Activated CD4-positive, alpha-beta T cell treated with anti-CD3 and anti-CD28 coated beads for 36 hours (primary cell): ENCODE measurements at regions of chrX and their contacts with region 1.

Region 1: DNA sequence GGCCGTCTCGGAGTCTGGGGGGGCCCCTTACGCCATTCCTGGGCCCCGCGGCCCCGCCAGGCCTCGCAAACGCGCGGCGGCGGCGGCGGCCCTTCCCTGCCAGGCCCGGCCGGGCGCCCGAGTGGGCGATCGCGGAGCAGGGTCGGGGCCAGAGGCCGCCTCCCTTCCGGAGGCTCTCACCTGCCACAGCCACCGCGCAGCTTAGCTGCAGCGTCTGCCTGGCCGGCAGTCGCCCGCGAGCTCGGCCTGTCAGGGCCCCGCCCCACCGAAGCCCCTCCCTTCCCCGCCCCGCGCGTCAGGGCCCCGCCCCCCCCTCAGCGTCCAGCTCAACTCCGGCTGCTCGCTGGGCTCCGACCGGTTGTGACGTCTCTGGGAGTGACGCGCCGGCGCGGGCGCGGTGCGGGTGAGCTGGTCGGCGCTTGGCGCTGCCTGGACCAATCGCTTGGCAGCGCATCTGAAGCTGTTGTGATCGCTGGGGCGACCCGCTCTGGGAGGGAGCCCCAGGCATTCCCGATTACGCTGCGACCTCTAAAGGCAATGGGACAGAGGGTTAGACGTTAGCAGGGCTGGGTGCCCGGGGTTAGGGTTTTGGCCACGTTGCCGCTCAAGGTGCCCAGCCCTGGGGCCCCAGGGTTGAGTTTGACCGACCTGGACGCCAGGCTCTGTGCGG is at the start of gene SLC10A3:
- DNase-seq: peak; percentile 94
- ATAC-seq: peak; percentile 91
- H3K4me3 Mint-ChIP-seq: peak within 1 kb of the TSS; percentile 85
- H3K27ac Mint-ChIP-seq: peak within 1 kb of the TSS; percentile 89
- H3K4me1 Mint-ChIP-seq: peaks cover 17% of the 10 kb centered on the region
- H3K27me3 Mint-ChIP-seq: no peaks in the 10 kb centered on the region
- total RNA-seq, gene SLC10A3: 10.4 to 11.3 TPM

Region 2: GRCh38 chrX:153724252-153725040 is 766.1 kb before region 1 on chrX and contains the starts of genes ABCD1 and BCAP31:
- CTCF ChIA-PET with region 1: no interaction called
- POLR2A ChIA-PET with region 1: interaction called, 3 read pairs
- intact Hi-C with region 1: loop called in 1 of 2 experiments (anchors 10 kb)
- DNase-seq: peak; percentile 93
- ATAC-seq: peak; percentile 84
- H3K4me3 Mint-ChIP-seq: peak within 1 kb of the TSS; percentile 89
- H3K27ac Mint-ChIP-seq: peak within 1 kb of the TSS; percentile 87
- H3K4me1 Mint-ChIP-seq: peaks cover 20% of the 10 kb centered on the region
- H3K27me3 Mint-ChIP-seq: no peaks in the 10 kb centered on the region
- total RNA-seq, gene ABCD1: 4.5 to 4.8 TPM
- total RNA-seq, gene BCAP31: 78.0 to 106 TPM

Region 3: DNA sequence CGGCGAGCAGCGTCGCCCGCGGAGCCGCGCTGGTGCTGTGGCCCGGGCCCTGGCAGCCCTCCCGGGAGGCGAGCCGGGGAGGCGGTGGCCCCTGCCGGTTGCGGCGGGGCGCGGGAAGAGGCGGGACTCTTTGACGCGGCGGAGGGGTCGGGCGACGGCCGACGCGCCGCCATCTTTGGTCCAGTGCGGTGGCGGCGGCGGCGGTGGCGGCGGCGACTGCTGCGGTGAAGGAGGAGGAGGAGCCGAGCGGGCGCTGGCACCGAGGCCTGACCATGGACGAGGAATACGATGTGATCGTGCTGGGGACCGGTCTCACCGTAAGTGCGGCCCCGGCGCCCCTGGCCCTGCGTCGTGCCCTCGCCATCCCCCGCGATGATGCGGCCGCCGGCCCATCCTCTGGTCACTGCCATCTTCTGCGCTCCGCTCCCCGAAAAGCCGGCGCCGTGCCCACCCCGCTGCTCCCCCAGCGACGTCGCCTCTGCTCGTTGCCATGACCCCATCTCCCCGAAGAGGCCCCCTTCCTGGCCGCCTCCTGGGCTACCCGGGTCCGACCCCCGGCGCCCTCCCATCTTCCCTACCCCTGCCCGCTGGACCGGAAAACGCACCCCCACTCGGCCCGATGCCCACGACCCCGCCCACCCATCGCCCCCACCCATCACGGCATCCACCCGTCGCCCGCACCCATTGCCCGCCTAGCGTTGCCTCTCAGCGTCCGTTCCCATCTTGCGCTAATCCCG is 53.4 kb before region 1 on chrX and contains the start of gene GDI1:
- CTCF ChIA-PET with region 1: interaction called, 3 read pairs
- POLR2A ChIA-PET with region 1: no interaction called
- intact Hi-C with region 1: loop called in 1 of 2 experiments (anchors 2 kb)
- DNase-seq: peak; percentile 69
- ATAC-seq: peak; percentile 40
- H3K4me3 Mint-ChIP-seq: peak within 1 kb of the TSS; percentile 83
- H3K27ac Mint-ChIP-seq: peak within 1 kb of the TSS; percentile 87
- H3K4me1 Mint-ChIP-seq: peaks cover 22% of the 10 kb centered on the region
- H3K27me3 Mint-ChIP-seq: no peaks in the 10 kb centered on the region
- total RNA-seq, gene GDI1: 100 to 117 TPM

Region 4: GRCh38 chrX:154478728-154479622 is 11.6 kb before region 1 on chrX and contains the start of gene LAGE3:
- CTCF ChIA-PET with region 1: interaction called, 3 read pairs
- POLR2A ChIA-PET with region 1: interaction called, 3 read pairs
- intact Hi-C with region 1: loop called in 1 of 2 experiments (anchors 1 kb)
- DNase-seq: peak; percentile 97
- ATAC-seq: peak; percentile 96
- H3K4me3 Mint-ChIP-seq: peak within 1 kb of the TSS; percentile 80
- H3K27ac Mint-ChIP-seq: peak within 1 kb of the TSS; percentile 90
- H3K4me1 Mint-ChIP-seq: peaks cover 24% of the 10 kb centered on the region
- H3K27me3 Mint-ChIP-seq: no peaks in the 10 kb centered on the region
- total RNA-seq, gene LAGE3: 34.7 to 43.0 TPM

Region 5: DNA sequence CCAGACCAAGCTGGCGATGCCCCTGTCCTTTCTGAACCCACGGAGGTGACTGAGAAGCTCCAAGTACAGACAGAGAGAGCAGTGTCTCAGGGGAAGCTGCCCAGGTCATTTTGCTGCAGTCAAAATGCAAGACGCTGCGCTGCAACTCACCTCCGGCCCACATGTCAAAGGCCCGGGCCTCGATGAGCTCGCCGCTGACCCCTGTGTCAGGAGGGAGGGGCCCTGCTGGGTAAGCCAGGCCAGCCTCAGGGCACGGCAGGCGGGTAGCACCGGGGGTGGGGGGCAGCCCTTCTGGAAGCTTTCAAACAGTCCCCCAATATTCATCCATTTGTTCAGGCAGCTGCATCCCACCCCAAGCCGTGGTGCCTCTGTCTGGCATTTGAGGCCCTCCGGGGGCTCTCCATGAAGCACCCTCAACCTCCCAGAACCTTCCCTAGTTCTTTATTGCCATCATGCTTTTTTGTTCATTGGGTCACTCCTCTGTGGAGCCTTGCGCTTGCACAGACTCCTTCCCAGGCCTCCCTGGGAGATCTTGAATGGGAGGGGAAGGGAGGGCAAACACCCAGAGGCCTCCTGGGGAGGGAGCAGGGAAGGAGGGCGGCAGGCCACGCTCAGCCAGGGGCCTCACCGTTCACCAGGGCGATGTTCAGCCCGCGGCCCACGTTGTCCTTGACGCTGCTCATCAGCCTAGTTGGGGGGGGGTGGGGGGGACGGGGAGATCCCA is 17.3 kb after region 1 on chrX:
- CTCF ChIA-PET with region 1: no interaction called
- POLR2A ChIA-PET with region 1: no interaction called
- intact Hi-C with region 1: no loop called
- DNase-seq: no peak
- ATAC-seq: no peak
- H3K4me3 Mint-ChIP-seq: no peak overlapping the region
- H3K27ac Mint-ChIP-seq: no peak overlapping the region
- H3K4me1 Mint-ChIP-seq: peaks cover 15% of the 10 kb centered on the region
- H3K27me3 Mint-ChIP-seq: no peaks in the 10 kb centered on the region

Region 6: GRCh38 chrX:154547245-154548027 is 56.9 kb after region 1 on chrX and contains the start of gene IKBKG:
- CTCF ChIA-PET with region 1: no interaction called
- POLR2A ChIA-PET with region 1: no interaction called
- intact Hi-C with region 1: loop called in 1 of 2 experiments (anchors 1 kb)
- DNase-seq: peak; percentile 92
- ATAC-seq: peak; percentile 81
- H3K4me3 Mint-ChIP-seq: peak within 1 kb of the TSS; percentile 99
- H3K27ac Mint-ChIP-seq: peak within 1 kb of the TSS; percentile 97
- H3K4me1 Mint-ChIP-seq: peaks cover 39% of the 10 kb centered on the region
- H3K27me3 Mint-ChIP-seq: no peaks in the 10 kb centered on the region
- total RNA-seq, gene IKBKG: 32.7 to 33.0 TPM